GM10248 (cell line): ENCODE measurements at regions of chr11 and their contacts with region 1.

Region 1: GRCh38 chr11:63738720-63739360 is 29.7 kb downstream of the ZFTA start:
- DNase-seq: peak; percentile 40
- CTCF ChIP-seq: peak; percentile 84

Region 2: GRCh38 chr11:63478896-63479295 is 259.9 kb before region 1 on chr11:
- CTCF ChIA-PET with region 1: interaction called, 22 read pairs
- POLR2A ChIA-PET with region 1: no interaction called
- DNase-seq: peak; percentile 79
- CTCF ChIP-seq: peak; percentile 92

Region 3: GRCh38 chr11:63510360-63511047 is 228.3 kb before region 1 on chr11:
- CTCF ChIA-PET with region 1: no interaction called
- POLR2A ChIA-PET with region 1: no interaction called
- DNase-seq: peak; percentile 11
- CTCF ChIP-seq: no peak

Region 4: DNA sequence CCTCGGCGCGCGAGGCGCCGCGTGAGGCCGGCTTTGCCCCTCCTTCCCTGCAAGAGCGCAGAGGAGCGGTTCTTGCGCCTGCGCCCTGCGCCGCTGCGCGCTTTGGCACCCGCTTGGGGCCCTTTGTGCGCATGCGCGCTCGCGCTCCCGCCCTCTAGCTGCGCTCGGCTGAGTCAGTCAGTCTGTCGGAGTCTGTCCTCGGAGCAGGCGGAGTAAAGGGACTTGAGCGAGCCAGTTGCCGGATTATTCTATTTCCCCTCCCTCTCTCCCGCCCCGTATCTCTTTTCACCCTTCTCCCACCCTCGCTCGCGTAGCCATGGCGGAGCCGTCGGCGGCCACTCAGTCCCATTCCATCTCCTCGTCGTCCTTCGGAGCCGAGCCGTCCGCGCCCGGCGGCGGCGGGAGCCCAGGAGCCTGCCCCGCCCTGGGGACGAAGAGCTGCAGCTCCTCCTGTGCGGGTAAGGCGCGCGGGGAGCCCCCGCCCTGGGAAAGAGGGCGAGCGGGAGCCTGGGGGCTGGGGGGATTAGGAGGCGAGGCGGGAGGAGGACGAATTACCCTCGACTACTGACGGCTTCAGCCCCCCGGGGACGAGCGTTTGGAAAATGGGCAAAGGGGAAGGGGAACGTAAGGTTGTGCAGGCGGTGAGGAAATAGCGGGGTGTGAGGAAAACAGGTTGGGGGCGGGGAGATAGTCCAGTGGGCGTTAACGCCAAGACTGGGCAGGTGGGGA is 57.4 kb before region 1 on chr11 and contains the start of gene RTN3:
- CTCF ChIA-PET with region 1: interaction called, 10 read pairs
- POLR2A ChIA-PET with region 1: no interaction called
- DNase-seq: peak; percentile 99
- CTCF ChIP-seq: no peak

Region 5: DNA sequence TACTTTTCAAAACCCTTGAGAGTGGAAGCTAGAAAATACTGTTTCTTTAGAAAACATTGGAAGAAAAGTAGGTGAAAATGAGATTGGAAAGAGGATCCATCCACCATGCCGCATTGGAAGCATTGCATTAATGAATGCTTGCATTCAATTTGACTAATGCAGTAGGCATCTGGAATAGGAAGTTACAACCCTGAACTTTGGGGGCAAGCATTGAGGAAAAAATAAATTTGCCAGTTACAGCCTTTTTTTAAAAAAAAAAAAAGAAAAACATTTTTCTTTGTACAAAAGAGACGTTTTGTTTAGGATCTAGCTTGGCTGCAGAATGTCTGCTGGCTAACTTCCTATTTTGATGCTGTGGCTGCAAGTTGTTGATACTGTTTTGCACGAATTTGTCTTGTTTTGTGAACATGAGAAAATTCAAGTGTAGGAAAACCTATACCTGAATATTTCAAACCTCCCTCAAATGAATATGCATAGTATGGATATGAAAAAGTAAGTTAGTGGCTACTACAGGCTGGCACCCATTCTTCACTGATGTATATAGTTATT is 29.4 kb before region 1 on chr11:
- CTCF ChIA-PET with region 1: interaction called, 11 read pairs
- POLR2A ChIA-PET with region 1: no interaction called
- DNase-seq: no peak
- CTCF ChIP-seq: no peak

Region 6: DNA sequence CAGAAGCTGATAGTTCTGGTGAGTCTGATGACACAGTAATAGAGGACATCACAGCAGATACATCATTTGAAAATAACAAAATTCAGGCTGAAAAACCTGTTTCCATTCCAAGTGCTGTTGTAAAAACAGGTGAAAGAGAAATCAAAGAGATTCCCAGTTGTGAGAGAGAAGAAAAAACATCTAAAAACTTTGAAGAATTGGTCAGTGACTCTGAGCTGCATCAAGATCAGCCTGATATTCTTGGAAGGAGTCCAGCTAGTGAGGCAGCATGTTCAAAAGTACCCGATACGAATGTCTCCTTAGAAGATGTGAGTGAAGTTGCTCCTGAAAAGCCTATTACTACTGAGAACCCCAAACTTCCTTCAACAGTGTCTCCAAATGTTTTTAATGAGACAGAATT is 18.9 kb before region 1 on chr11:
- CTCF ChIA-PET with region 1: interaction called, 13 read pairs
- POLR2A ChIA-PET with region 1: no interaction called
- DNase-seq: no peak
- CTCF ChIP-seq: no peak

Region 7: GRCh38 chr11:63752196-63752595 is 13.4 kb after region 1 on chr11:
- CTCF ChIA-PET with region 1: interaction called, 40 read pairs
- POLR2A ChIA-PET with region 1: no interaction called
- DNase-seq: no peak
- CTCF ChIP-seq: no peak

Region 8: DNA sequence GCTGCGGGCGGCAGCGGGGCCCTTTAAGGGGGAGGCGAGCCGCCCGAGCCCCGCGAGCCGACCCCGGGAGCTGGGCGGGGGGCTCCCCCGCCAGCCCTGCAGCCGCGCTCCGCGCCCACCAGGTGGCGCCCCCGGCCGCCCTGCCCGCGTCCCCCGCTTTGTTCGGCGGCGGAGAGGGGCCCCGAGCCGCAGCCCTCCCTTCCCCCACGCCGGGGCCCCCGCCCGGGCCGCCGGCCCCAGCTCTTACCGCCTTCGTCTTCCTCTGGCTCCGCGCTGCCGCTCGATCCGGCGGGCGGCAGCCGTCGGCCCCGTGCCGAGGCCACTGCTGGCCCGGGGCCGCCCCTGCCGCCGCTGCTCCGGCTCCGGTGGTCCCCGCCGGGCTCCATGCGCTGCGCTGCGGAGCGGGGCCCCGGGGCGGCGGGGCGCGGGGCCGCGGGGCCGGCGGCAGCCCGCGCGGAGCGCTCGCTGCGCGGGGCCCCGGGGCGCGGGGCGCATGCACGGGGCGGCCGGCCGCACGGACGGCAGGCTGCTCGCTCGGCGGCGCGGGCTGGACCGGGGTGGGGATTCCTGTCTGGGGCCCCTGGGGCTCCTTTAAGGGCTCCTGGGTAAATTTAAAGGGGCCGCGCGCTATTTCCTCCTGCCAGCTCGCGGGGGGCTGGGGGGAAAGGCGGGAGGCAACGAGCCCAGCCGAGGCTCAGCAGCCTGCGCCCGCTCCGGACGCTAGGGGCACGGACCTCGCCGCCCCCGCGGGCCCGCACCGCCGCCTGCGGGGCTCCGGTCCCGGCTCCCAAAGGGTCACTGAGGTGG is 29.6 kb after region 1 on chr11 and contains the start of gene ZFTA:
- CTCF ChIA-PET with region 1: interaction called, 10 read pairs
- POLR2A ChIA-PET with region 1: no interaction called
- DNase-seq: peak; percentile 89
- CTCF ChIP-seq: peak; percentile 80